ENCODE measurements at regions of chr11 and their contacts with region 1.

Region 1: GRCh38 chr11:72222907-72223614 is 1.5 kb upstream of the INPPL1 start:
- DNase-seq: peak; percentile 83 to 97 (median 94)
- ATAC-seq: peak; percentile 78
- H3K4me3 ChIP-seq: peak overlapping the region; percentile 48 to 84
- H3K4me3 Mint-ChIP-seq: peak overlapping the region; percentile 87
- H3K27ac ChIP-seq: peak overlapping the region; percentile 23 to 78
- H3K27ac Mint-ChIP-seq: peak overlapping the region; percentile 90
- H3K4me1 ChIP-seq: peaks cover 21% of the 10 kb centered on the region
- H3K4me1 Mint-ChIP-seq: peaks cover 22% of the 10 kb centered on the region
- H3K27me3 ChIP-seq: no peaks in the 10 kb centered on the region
- H3K27me3 Mint-ChIP-seq: peaks cover 4% of the 10 kb centered on the region
- CTCF ChIP-seq: no peak

Region 2: DNA sequence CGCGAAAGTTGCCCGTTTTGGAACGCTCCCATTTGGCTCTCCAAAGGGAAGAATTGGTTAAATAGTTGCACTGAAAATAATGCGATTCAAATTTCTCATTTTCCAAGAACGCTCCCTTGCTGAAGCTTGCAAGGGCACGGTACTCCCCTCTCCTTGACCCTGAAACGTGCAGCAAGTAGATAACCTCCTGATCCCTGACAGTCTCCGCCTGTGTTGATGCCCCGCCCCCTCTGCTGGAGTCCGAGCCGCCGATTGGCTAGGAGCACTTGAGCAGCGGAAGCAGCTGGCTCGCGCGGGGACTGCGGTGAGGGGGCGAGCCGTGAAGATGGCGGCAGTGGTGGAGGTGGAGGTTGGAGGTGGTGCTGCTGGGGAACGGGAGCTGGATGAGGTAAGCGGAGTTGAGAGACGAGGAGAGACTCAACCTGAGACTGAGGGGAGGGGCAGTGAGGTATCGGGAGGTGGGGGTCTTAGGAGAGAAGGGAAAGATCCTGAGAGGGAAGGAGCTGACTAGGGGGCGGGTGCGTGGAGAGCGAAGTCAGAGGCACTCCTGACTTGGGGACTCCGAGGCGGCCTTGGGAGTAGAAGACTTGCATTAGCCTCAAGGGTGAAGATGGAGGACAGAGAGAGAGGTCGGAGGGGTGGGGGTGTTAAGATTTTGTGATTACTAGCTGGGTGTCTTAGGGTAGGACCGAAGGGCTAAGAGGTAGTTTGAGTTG is 294.2 kb before region 1 on chr11 and contains the start of gene RNF121:
- CTCF ChIA-PET with region 1: no interaction called
- POLR2A ChIA-PET with region 1: interaction called, 3 read pairs
- intact Hi-C with region 1: loop called (anchors 1 kb)
- DNase-seq: peak; percentile 94 to 99 (median 97)
- ATAC-seq: peak; percentile 86
- H3K4me3 ChIP-seq: peak within 1 kb of the TSS; percentile 67 to 98
- H3K4me3 Mint-ChIP-seq: peak within 1 kb of the TSS; percentile 100
- H3K27ac ChIP-seq: peak within 1 kb of the TSS; percentile 90 to 96
- H3K27ac Mint-ChIP-seq: peak within 1 kb of the TSS; percentile 99
- H3K4me1 ChIP-seq: peaks cover 22% of the 10 kb centered on the region
- H3K4me1 Mint-ChIP-seq: peaks cover 57% of the 10 kb centered on the region
- H3K27me3 ChIP-seq: no peaks in the 10 kb centered on the region
- H3K27me3 Mint-ChIP-seq: no peaks in the 10 kb centered on the region
- CTCF ChIP-seq: no peak
- total RNA-seq, gene RNF121: 8.5 to 9.0 TPM

Region 3: DNA sequence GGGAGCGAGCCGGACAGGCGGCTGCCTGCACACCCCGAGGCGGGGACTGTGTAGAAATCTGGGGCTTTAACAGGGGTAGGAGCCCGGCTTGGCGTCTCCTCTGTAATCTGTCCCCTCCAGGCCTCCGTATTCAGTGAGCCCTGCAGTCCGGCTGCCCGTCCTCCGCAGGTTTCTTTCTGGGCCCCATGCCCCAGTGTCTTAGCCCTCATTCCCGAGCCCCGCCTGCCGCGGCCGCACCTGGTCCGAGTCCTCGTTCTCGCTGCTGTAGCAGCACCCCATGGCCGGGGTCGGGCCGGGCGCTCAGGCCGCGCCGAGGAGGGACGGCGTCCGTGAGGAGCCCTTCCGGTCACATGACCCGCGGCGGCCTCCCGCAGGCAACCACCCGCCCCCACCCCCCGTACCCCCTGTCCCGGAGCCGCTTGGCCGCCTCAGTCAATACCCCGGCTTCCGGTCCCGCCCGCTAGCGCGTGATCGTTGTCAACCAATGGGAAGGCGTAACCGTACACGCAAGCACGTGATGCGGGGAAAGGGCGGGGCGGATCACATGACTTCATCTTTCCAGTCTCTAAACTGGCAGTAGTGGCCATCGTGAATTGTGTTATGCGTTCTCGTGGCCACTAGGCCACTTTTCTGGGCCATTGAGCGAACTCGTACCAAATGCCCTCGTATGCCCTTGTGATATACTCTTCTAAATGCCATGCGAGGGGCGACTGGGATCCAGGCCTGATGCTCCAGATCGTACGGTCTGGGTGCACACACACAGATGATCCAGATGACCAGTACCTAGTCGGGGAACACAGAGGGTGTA is 119.9 kb before region 1 on chr11 and contains the start of gene LAMTOR1:
- CTCF ChIA-PET with region 1: no interaction called
- POLR2A ChIA-PET with region 1: interaction called, 3 read pairs
- intact Hi-C with region 1: loop called in 1 of 2 experiments (anchors 2 kb)
- DNase-seq: peak; percentile 93 to 99 (median 98)
- ATAC-seq: peak; percentile 96
- H3K4me3 ChIP-seq: peak within 1 kb of the TSS; percentile 67 to 93
- H3K4me3 Mint-ChIP-seq: peak within 1 kb of the TSS; percentile 74
- H3K27ac ChIP-seq: peak within 1 kb of the TSS; percentile 90 to 97
- H3K27ac Mint-ChIP-seq: peak within 1 kb of the TSS; percentile 88
- H3K4me1 ChIP-seq: peaks cover 22% of the 10 kb centered on the region
- H3K4me1 Mint-ChIP-seq: peaks cover 45% of the 10 kb centered on the region
- H3K27me3 ChIP-seq: no peaks in the 10 kb centered on the region
- H3K27me3 Mint-ChIP-seq: no peaks in the 10 kb centered on the region
- CTCF ChIP-seq: no peak
- total RNA-seq, gene LAMTOR1: 27.1 to 30.4 TPM

Region 4: DNA sequence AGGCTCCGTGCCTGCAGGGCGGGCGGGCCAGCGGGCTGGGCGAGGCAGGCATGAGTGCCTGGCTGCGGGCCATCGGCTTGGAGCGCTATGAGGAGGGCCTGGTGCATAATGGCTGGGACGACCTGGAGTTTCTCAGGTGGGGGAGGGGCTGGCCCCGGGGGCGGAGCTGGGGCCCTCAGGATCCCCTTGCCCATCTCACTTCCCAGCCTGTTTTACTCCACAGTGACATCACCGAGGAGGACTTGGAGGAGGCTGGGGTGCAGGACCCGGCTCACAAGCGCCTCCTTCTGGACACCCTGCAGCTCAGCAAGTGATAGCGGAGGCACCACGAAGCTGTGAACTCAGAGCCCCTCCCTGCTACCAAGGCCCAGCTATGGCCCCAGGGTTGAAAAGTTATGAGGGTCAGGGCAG is 15.0 kb after region 1 on chr11:
- CTCF ChIA-PET with region 1: interaction called, 6 read pairs
- POLR2A ChIA-PET with region 1: interaction called, 5 read pairs
- intact Hi-C with region 1: loop called in 1 of 2 experiments (anchors 1 kb)
- DNase-seq: peak in 6 of 9 experiments; percentile 14 to 67 (median 52)
- ATAC-seq: peak; percentile 77
- H3K4me3 ChIP-seq: no peak overlapping the region
- H3K4me3 Mint-ChIP-seq: no peak overlapping the region
- H3K27ac ChIP-seq: no peak overlapping the region
- H3K27ac Mint-ChIP-seq: no peak overlapping the region
- H3K4me1 ChIP-seq: peaks cover 17% of the 10 kb centered on the region
- H3K4me1 Mint-ChIP-seq: peaks cover 23% of the 10 kb centered on the region
- H3K27me3 ChIP-seq: peaks cover 22 to 34% of the 10 kb centered on the region in 2 experiments
- H3K27me3 Mint-ChIP-seq: peaks cover 30% of the 10 kb centered on the region
- CTCF ChIP-seq: peak; percentile 41

Region 5: DNA sequence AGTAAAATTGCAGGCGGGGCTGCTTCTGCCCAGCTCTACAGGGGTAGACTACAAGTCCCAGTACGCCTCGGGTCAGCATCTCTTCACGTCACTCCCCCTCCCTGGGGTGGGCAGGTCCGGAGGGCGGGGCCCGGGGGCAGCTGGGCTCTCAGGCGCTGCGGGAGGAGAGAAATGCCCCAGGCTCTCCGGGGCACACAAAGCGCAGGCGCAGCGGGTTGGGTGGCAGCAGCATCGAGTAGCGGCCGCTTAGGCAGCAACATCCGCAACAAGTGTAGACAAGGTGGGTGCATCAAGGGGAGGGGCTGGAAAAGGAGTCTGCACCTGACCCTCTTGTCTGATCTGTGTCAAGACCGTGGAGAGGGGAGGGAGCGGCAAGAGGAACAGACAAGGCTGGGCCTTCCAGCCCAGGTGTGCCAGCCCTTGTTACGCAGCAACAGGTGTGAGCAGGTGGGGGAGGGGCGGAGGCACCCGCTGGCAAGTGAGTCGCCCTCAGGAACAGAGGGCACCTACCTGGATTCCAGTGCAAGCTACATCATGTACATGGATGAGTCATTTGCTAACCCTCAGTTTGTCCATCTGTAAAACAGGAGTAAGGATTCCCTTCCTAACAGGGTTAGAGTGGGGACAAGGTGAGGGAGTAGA is 1424.5 kb after region 1 on chr11:
- CTCF ChIA-PET with region 1: no interaction called
- POLR2A ChIA-PET with region 1: no interaction called
- intact Hi-C with region 1: loop called in 1 of 2 experiments (anchors 5 kb)
- DNase-seq: peak; percentile 89 to 97 (median 94)
- ATAC-seq: peak; percentile 99
- H3K4me3 ChIP-seq: peak overlapping the region; percentile 55 to 79
- H3K4me3 Mint-ChIP-seq: peak overlapping the region; percentile 90
- H3K27ac ChIP-seq: peak overlapping the region; percentile 42 to 58
- H3K27ac Mint-ChIP-seq: peak overlapping the region; percentile 94
- H3K4me1 ChIP-seq: peaks cover 19% of the 10 kb centered on the region
- H3K4me1 Mint-ChIP-seq: peaks cover 24% of the 10 kb centered on the region
- H3K27me3 ChIP-seq: peaks cover 0 to 4% of the 10 kb centered on the region in 2 experiments
- H3K27me3 Mint-ChIP-seq: no peaks in the 10 kb centered on the region
- CTCF ChIP-seq: no peak